ENCODE measurements at regions of chr3 and their contacts with region 1.

Region 1: GRCh38 chr3:37324850-37325321 is 150.5 kb upstream of the LRRFIP2 start:
- DNase-seq: no peak
- ATAC-seq: no peak
- H3K4me3 ChIP-seq: no peak overlapping the region
- H3K4me3 Mint-ChIP-seq: no peak overlapping the region
- H3K27ac ChIP-seq: no peak overlapping the region
- H3K27ac Mint-ChIP-seq: peak overlapping the region; percentile 27
- H3K4me1 ChIP-seq: no peaks in the 10 kb centered on the region
- H3K4me1 Mint-ChIP-seq: peaks cover 9% of the 10 kb centered on the region
- H3K27me3 ChIP-seq: no peaks in the 10 kb centered on the region
- H3K27me3 Mint-ChIP-seq: no peaks in the 10 kb centered on the region
- CTCF ChIP-seq: no peak

Region 2: DNA sequence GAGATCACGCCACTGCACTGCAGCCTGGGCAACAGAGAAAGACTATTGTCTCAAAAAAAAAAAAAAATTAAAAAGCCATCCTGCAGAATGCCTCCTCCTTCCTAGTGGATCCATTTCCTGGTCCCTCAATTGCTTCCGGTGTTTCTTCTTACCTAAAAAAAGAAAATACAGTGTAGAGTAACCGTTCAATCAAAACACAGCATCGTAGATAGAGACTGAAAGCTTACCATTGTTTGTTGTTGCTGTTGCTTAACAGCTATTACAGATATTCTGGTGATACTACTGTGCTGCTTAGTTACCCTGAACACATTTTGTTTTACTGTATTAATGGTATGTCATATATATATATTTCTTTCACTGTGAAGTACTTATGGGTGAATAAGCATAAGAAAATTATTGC is 45.0 kb before region 1 on chr3:
- CTCF ChIA-PET with region 1: no interaction called
- POLR2A ChIA-PET with region 1: no interaction called
- intact Hi-C with region 1: loop called in 1 of 2 experiments (anchors 5 kb)
- DNase-seq: no peak
- ATAC-seq: no peak
- H3K4me3 ChIP-seq: no peak overlapping the region
- H3K4me3 Mint-ChIP-seq: no peak overlapping the region
- H3K27ac ChIP-seq: no peak overlapping the region
- H3K27ac Mint-ChIP-seq: no peak overlapping the region
- H3K4me1 ChIP-seq: no peaks in the 10 kb centered on the region
- H3K4me1 Mint-ChIP-seq: peaks cover 24% of the 10 kb centered on the region
- H3K27me3 ChIP-seq: no peaks in the 10 kb centered on the region
- H3K27me3 Mint-ChIP-seq: no peaks in the 10 kb centered on the region
- CTCF ChIP-seq: no peak

Measured in CD8-positive, alpha-beta T cell (primary cell).